Common myeloid progenitor, CD34-positive (primary cell): ENCODE measurements at regions of chr10 and their contacts with region 1.

Region 1: GRCh38 chr10:77264107-77264506 is 373.5 kb downstream of the KCNMA1 start:
- DNase-seq: peak; percentile 78 to 96 (median 94)
- H3K4me3 ChIP-seq: peak overlapping the region in 2 of 7 experiments; percentile 20 to 46
- H3K27ac ChIP-seq: no peak overlapping the region
- H3K4me1 ChIP-seq: peaks cover 27 to 39% (median 32%) of the 10 kb centered on the region in 4 experiments
- H3K27me3 ChIP-seq: peaks cover 0 to 2% (median 0%) of the 10 kb centered on the region in 5 experiments

Region 2: DNA sequence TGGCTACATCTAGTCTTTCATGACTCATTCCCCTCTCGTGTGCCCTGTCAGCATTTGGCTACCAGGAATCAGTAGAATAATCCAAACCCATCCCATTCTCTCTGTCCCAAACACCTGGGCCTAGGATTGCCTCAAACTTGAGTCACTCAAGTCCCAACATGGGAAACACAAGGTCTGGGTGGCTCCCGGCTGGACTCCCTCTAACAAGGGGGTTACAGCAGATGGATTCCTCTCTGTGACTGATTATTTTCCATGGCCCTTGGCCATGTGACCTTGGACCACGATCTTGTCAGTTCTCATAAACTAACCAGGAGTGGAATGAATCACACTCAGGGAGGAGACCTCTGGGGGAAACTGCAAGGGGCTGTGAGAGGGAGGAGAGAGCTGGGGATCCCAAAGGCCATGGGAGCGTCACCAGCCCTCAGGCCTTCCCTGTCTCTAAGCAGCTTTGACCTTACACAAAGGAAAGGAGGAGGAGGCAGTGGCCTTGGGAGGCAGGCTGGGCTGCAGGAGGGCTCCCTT is 159.6 kb before region 1 on chr10:
- CTCF ChIA-PET with region 1: no interaction called
- POLR2A ChIA-PET with region 1: no interaction called
- DNase-seq: no peak
- H3K4me3 ChIP-seq: no peak overlapping the region
- H3K27ac ChIP-seq: no peak overlapping the region
- H3K4me1 ChIP-seq: no peaks in the 10 kb centered on the region
- H3K27me3 ChIP-seq: peaks cover 0 to 1% (median 0%) of the 10 kb centered on the region in 5 experiments

Region 3: DNA sequence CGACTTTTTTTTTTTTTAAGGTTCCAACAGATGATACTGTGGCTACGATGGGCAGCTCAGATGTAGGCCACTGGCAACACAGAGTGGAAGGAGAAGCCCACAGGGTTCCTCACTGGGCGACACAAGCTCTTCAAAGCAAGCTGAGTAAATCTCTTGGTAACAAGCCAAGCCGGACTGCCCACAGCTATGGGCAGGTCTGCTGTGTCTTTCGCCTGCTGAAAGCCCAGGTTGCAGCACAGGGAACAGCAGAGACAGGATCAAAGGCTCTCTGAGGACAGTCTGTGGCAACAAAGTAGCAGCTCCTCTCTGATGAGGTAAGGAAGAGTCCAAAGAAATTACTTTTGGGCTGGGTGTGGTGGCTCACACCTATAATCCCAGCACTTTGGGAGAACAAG is 289.9 kb after region 1 on chr10:
- CTCF ChIA-PET with region 1: no interaction called
- POLR2A ChIA-PET with region 1: interaction called, 13 read pairs
- DNase-seq: no peak
- H3K4me3 ChIP-seq: no peak overlapping the region
- H3K27ac ChIP-seq: no peak overlapping the region
- H3K4me1 ChIP-seq: peaks cover 0 to 15% (median 0%) of the 10 kb centered on the region in 4 experiments
- H3K27me3 ChIP-seq: peaks cover 0 to 2% (median 0%) of the 10 kb centered on the region in 5 experiments